IMR-90 (cell line): ENCODE measurements at regions of chrX and their contacts with region 1.

Region 1: GRCh38 chrX:31099536-31100090 is 27.8 kb upstream of the FTHL17 start:
- DNase-seq: no peak
- ATAC-seq: no peak
- H3K4me3 ChIP-seq: no peak overlapping the region
- H3K27ac ChIP-seq: no peak overlapping the region
- H3K4me1 ChIP-seq: no peaks in the 10 kb centered on the region
- H3K27me3 ChIP-seq: no peaks in the 10 kb centered on the region
- CTCF ChIP-seq: no peak
- POLR2A ChIP-seq: no peak
- RAD21 ChIP-seq: no peak

Region 2: DNA sequence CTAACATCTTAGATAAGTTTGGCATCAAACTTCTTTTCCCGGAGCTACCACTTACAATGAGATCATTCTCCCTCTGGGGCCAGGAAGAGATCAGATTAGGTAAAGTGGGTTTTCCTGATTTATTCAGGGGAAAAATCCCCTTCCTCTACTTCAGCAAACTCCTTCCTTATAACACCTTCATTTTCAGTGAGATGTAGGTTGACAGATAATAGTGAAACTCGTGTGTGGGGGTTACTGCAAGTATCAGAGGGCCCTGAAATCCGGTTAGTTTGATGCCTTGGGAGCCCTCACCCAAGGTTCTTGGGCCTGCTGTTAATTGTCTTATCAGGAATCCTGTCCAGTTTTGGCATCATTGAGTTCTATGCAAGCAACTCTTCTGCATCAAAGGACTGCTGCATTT is 38.5 kb before region 1 on chrX:
- CTCF ChIA-PET with region 1: no interaction called
- POLR2A ChIA-PET with region 1: no interaction called
- dilution Hi-C with region 1: no loop called
- in situ Hi-C with region 1: no loop called
- intact Hi-C with region 1: loop called (anchors 2 kb)
- DNase-seq: no peak
- ATAC-seq: no peak
- H3K4me3 ChIP-seq: no peak overlapping the region
- H3K27ac ChIP-seq: no peak overlapping the region
- H3K4me1 ChIP-seq: no peaks in the 10 kb centered on the region
- H3K27me3 ChIP-seq: no peaks in the 10 kb centered on the region
- CTCF ChIP-seq: no peak
- POLR2A ChIP-seq: no peak
- RAD21 ChIP-seq: no peak

Region 3: GRCh38 chrX:31706466-31706865 is 606.9 kb after region 1 on chrX:
- CTCF ChIA-PET with region 1: no interaction called
- POLR2A ChIA-PET with region 1: no interaction called
- dilution Hi-C with region 1: no loop called
- in situ Hi-C with region 1: no loop called
- intact Hi-C with region 1: loop called (anchors 5 kb)
- DNase-seq: no peak
- ATAC-seq: no peak
- H3K4me3 ChIP-seq: no peak overlapping the region
- H3K27ac ChIP-seq: no peak overlapping the region
- H3K4me1 ChIP-seq: no peaks in the 10 kb centered on the region
- H3K27me3 ChIP-seq: no peaks in the 10 kb centered on the region
- CTCF ChIP-seq: no peak
- POLR2A ChIP-seq: no peak
- RAD21 ChIP-seq: no peak